PC-3 (cell line): ENCODE measurements at regions of chr5 and their contacts with region 1.

Region 1: GRCh38 chr5:159915904-159916840 is at the start of gene ADRA1B:
- DNase-seq: peak; percentile 68
- ATAC-seq: peak; percentile 90
- H3K4me3 ChIP-seq: peak within 1 kb of the TSS; percentile 68
- H3K27ac ChIP-seq: no peak within 1 kb of the TSS
- H3K4me1 ChIP-seq: peaks cover 34% of the 10 kb centered on the region
- H3K27me3 ChIP-seq: no peaks in the 10 kb centered on the region
- CTCF ChIP-seq: peak; percentile 53
- total RNA-seq, gene ADRA1B: 0.29 and 0.40 TPM in 2 replicates

Region 2: DNA sequence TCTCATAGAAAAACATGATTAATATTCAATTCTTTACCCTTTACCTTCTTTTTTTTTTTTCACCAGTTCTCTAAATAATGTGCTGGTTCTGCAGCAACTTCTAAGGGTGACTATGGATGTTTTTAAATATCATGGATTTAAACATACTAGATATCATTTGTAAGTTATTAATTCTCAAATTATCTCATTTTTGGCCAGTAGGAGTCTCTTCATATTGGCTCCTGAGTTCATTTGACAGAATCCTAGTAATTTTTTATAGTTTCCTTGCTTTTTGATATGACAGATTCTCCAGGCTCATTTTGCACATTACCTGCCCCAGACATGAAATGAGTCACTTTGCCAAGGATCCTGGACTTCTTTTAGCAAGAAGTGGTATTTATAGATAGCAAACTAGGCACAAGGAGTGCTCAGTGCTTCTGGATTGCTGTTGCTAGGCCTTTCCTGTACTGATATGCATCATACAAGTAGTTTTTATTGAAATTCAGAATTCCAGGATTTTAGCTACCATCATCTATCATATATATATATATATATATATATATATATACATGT is 384.5 kb before region 1 on chr5:
- CTCF ChIA-PET with region 1: no interaction called
- POLR2A ChIA-PET with region 1: no interaction called
- intact Hi-C with region 1: loop called (anchors 1 kb)
- DNase-seq: peak; percentile 36
- ATAC-seq: peak; percentile 42
- H3K4me3 ChIP-seq: no peak overlapping the region
- H3K27ac ChIP-seq: no peak overlapping the region
- H3K4me1 ChIP-seq: no peaks in the 10 kb centered on the region
- H3K27me3 ChIP-seq: no peaks in the 10 kb centered on the region
- CTCF ChIP-seq: peak; percentile 48; the same call in 1 of the 2 replicates

Region 3: DNA sequence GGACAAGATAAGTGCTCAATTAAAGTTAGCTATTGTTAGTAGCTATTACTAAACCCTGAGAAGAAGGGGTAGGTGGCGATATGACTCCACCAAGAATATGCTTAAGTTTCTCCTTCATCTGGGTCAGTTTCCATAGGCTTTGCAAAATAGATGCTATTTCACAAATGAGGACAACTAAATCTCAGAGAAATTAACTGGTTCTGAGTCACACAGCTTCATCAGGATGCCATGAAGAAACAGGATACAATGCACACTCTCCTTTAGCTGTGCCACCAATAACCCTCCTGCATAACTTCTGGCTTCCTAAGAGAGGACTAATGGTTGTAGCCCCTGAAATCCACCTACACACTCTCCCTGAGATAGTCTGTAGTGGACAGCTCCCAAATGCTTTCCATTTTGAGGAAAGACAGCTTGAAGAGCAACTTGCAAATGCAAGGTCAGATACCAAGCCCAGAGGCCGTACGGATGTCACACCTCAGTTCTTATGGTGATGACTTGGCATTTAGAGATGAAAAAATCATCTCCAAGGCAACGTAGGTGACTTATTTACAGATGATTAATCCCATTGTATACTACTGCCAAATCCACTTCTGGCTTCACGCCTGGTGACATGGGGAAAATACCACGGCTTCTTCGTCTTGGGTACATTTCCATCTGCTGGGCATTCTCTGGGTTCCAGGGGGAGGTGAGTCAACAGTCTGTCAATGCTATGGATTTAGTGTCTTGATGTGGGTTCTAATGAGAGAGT is 334.5 kb before region 1 on chr5:
- CTCF ChIA-PET with region 1: no interaction called
- POLR2A ChIA-PET with region 1: no interaction called
- intact Hi-C with region 1: loop called (anchors 5 kb)
- DNase-seq: peak; percentile 95
- ATAC-seq: peak; percentile 73
- H3K4me3 ChIP-seq: no peak overlapping the region
- H3K27ac ChIP-seq: peak overlapping the region; percentile 80
- H3K4me1 ChIP-seq: peaks cover 31% of the 10 kb centered on the region
- H3K27me3 ChIP-seq: no peaks in the 10 kb centered on the region
- CTCF ChIP-seq: peak; percentile 26; the same call in 1 of the 2 replicates

Region 4: DNA sequence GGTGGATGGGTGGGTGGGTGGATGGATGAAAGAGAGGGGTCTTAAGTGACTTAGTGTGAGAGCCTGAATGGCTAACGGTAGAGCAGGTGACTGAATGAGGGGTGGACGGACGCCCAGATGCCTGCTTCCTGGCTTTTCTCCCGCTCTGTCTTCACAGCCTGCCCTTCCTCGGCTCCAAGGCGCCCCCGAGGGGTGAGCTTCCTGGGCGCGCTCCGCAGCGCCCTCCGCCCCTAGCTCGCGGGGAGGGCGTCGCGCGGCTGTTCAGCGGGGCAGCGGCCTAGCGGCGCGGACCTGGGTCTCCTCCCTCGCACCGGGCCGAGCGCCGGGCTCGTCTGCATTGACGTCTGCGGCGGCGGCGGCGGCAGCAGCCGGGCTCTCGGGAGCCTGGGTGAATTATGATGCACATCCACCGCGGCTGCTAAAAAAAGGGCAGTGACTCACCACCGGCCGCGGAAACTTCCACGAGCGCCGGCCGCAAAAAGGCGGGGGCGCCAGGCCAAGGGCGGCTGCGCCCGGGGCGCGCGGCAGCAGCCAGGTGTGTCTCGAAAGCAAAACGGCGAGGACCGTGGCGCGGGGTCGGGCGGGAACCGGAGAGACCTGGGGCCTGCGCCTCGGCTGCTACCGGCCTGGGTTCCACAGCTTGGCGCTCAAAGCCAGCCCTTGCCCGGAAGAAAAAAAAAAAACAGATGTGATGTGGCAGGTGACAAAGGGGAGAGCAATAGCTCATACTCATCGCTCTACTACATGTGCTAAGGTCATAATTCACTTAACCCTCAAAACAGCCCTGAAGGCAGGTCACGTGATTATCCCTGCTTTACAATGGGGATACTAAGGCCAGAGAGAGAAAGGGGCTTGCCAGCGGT is 142.9 kb before region 1 on chr5:
- CTCF ChIA-PET with region 1: no interaction called
- POLR2A ChIA-PET with region 1: no interaction called
- intact Hi-C with region 1: loop called (anchors 5 kb)
- DNase-seq: peak; percentile 86
- ATAC-seq: peak; percentile 93
- H3K4me3 ChIP-seq: peak overlapping the region; percentile 63
- H3K27ac ChIP-seq: peak overlapping the region; percentile 29
- H3K4me1 ChIP-seq: peaks cover 23% of the 10 kb centered on the region
- H3K27me3 ChIP-seq: no peaks in the 10 kb centered on the region
- CTCF ChIP-seq: peak; percentile 59